IMR-90 (cell line): ENCODE measurements at regions of chr21 and their contacts with region 1.

Region 1: GRCh38 chr21:17279663-17280062 is 233.2 kb upstream of the CXADR start:
- DNase-seq: no peak
- ATAC-seq: no peak
- H3K4me3 ChIP-seq: no peak overlapping the region
- H3K27ac ChIP-seq: no peak overlapping the region
- H3K4me1 ChIP-seq: no peaks in the 10 kb centered on the region
- H3K27me3 ChIP-seq: no peaks in the 10 kb centered on the region
- CTCF ChIP-seq: no peak
- POLR2A ChIP-seq: no peak
- RAD21 ChIP-seq: no peak

Region 2: DNA sequence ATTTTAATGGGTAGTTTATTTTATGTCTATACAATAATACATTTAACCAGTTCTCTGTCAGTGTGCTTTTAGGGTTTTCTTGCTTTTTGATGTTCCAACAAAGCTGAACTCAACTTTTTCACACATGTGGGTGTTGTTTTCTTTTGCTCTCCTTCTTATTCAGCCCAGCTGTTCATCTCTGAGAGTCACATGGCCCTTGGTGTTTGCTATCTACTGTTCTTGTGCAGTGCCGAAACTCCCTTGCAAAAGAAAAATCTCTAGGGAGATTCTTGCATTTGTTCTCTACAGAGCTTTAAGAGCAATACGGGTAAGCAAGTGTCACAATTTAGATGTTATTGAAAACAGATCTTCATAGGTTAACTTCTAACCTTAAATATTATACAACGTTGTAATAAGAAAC is 47.9 kb before region 1 on chr21:
- CTCF ChIA-PET with region 1: no interaction called
- POLR2A ChIA-PET with region 1: no interaction called
- dilution Hi-C with region 1: no loop called
- in situ Hi-C with region 1: no loop called
- intact Hi-C with region 1: loop called (anchors 10 kb)
- DNase-seq: no peak
- ATAC-seq: no peak
- H3K4me3 ChIP-seq: no peak overlapping the region
- H3K27ac ChIP-seq: no peak overlapping the region
- H3K4me1 ChIP-seq: no peaks in the 10 kb centered on the region
- H3K27me3 ChIP-seq: no peaks in the 10 kb centered on the region
- CTCF ChIP-seq: no peak
- POLR2A ChIP-seq: no peak
- RAD21 ChIP-seq: no peak

Region 3: DNA sequence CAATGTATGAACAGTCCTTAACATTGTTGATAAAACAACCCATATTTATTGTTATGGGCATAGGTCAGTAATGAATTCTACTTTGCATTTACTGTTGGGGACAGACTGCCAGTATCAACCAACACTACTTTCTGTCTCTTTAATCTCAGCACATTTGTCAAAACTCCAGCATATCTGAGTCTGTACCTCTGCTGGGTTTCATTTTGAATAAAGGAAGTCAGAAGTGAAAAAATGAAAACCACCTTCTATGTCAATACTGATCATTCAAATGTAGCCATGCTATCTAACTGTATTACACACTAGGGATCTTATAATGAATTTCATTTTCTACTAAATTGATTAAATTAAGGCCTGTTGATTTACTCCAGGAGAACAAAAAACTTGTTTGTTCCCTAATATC is 209.0 kb after region 1 on chr21:
- CTCF ChIA-PET with region 1: no interaction called
- POLR2A ChIA-PET with region 1: no interaction called
- dilution Hi-C with region 1: no loop called
- in situ Hi-C with region 1: no loop called
- intact Hi-C with region 1: no loop called
- DNase-seq: no peak
- ATAC-seq: no peak
- H3K4me3 ChIP-seq: no peak overlapping the region
- H3K27ac ChIP-seq: no peak overlapping the region
- H3K4me1 ChIP-seq: peaks cover 10% of the 10 kb centered on the region
- H3K27me3 ChIP-seq: no peaks in the 10 kb centered on the region
- CTCF ChIP-seq: no peak
- POLR2A ChIP-seq: no peak
- RAD21 ChIP-seq: no peak